PC-3 (cell line): ENCODE measurements at regions of chr7 and their contacts with region 1.

Region 1: GRCh38 chr7:39623018-39623731 is at the start of gene RALA:
- DNase-seq: peak; percentile 87
- ATAC-seq: peak; percentile 92
- H3K4me3 ChIP-seq: peak within 1 kb of the TSS; percentile 83
- H3K27ac ChIP-seq: peak within 1 kb of the TSS; percentile 75
- H3K4me1 ChIP-seq: peaks cover 50% of the 10 kb centered on the region
- H3K27me3 ChIP-seq: no peaks in the 10 kb centered on the region
- CTCF ChIP-seq: no peak
- total RNA-seq, gene RALA: 7.5 and 12.9 TPM in 2 replicates

Region 2: DNA sequence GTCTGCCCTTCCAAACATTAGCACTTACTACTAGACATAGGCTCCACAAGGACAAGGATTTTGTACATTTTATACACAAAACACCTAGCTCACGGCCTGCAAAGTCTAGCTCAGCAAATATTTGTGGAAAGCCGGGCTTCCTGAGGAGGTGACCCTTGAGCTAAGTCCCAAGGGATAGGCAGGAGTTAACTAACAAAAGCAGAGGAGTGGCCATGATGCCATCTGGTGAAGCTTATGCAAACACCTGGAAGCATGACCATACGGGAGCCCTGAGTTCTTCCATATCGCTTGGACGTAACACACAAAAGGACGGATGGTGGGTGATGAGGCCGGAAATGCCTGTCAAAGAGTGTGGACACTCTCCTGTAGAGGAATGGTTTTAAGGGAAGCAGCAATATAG is 82.9 kb before region 1 on chr7:
- CTCF ChIA-PET with region 1: no interaction called
- POLR2A ChIA-PET with region 1: interaction called, 14 read pairs
- intact Hi-C with region 1: no loop called
- DNase-seq: no peak
- ATAC-seq: no peak
- H3K4me3 ChIP-seq: no peak overlapping the region
- H3K27ac ChIP-seq: no peak overlapping the region
- H3K4me1 ChIP-seq: no peaks in the 10 kb centered on the region
- H3K27me3 ChIP-seq: 0 out of 2 replicates have a peak, but pooled peaks cover 5% of the 10 kb centered on the region
- CTCF ChIP-seq: no peak

Region 3: DNA sequence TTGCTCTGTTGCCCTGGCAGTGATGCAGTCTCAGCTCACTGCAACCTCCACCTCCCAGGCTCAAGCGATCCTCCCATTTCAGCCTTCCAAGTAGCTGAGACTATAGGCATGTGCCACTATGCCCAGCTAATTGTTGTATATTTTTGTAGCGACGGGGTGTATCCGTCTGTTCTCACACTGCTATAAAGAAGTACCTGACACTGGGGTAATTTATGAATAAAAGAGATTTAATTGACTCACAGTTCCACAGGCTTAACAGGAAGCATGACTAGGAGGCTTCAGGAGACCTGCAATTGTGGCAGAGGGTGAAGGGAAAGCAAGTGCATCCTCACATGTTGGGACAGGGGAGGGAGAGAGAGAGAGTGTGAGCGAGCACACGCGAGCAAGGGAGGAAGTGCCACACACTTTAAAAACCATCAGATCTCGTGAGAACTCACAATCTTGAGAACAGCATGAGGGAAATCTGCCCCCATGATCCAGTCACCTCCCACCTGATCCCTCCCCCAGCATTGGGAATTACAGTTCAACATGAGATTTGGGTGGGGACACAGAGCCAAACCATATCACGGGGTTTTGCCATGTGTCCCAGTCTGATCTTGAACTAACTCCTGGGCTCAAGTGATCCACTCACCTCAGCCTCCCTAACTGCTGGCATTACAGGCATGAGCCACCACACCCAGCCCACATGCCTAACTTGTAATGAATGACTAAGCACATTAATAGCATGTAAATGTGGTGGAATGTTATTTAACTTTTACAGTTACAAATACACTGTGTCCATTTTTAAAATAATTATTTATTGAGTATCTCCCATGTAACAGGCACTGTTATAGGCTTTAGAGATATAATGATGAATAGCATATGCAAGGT is 65.7 kb after region 1 on chr7:
- CTCF ChIA-PET with region 1: interaction called, 5 read pairs
- POLR2A ChIA-PET with region 1: no interaction called
- intact Hi-C with region 1: loop called (anchors 1 kb)
- DNase-seq: peak; percentile 49
- ATAC-seq: peak; percentile 78
- H3K4me3 ChIP-seq: no peak overlapping the region
- H3K27ac ChIP-seq: no peak overlapping the region
- H3K4me1 ChIP-seq: peaks cover 24% of the 10 kb centered on the region
- H3K27me3 ChIP-seq: no peaks in the 10 kb centered on the region
- CTCF ChIP-seq: no peak

Region 4: GRCh38 chr7:39746103-39746819 is 123.1 kb after region 1 on chr7:
- CTCF ChIA-PET with region 1: interaction called, 3 read pairs
- POLR2A ChIA-PET with region 1: interaction called, 4 read pairs
- intact Hi-C with region 1: loop called (anchors 1 kb)
- DNase-seq: peak; percentile 79
- ATAC-seq: peak; percentile 88
- H3K4me3 ChIP-seq: no peak overlapping the region
- H3K27ac ChIP-seq: no peak overlapping the region
- H3K4me1 ChIP-seq: no peaks in the 10 kb centered on the region
- H3K27me3 ChIP-seq: no peaks in the 10 kb centered on the region
- CTCF ChIP-seq: peak; percentile 85